HCT116 (cell line): ENCODE measurements at regions of chr7 and their contacts with region 1.

Region 1: DNA sequence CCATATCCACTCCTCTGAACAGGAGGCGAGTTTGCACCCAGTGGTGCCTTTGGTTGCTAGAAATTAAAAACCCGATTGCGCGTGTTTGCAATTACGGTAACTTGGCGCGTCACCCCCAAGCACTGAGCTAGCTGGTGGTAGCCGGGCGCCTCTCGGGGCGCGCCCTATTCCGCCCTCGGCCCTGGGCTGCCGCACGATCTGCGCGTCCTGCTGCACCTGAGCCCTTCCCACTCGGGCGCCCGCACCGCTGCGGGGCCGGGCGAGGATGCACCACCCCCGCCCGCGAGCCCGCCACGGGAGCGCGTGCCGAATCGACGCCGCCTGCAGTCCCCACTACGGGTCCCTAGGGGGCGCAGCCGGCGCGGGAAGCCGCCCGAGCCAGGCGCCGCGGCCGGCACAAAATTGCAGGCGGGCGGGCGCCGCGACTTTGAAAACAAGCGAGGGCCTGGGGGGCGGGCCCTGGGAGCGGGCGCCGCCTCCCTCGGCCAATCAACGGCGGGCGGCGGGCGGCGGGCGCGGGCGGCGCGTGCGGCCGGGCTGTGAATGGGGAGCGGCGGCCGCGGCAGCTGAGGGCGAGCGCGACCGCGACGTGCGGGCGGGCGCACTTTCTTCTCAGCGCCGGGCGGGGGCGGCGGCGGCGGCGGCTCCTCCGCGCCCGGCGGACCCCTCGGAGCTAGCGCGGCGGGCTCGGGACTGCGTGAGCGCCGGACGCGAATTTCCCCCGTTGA is at the start of gene SDK1:
- DNase-seq: peak; percentile 71
- ATAC-seq: peak; percentile 95
- H3K4me3 ChIP-seq: no peak within 1 kb of the TSS
- H3K27ac ChIP-seq: no peak within 1 kb of the TSS
- H3K4me1 ChIP-seq: peaks cover 0 to 2% of the 10 kb centered on the region in 2 experiments; a peak in 1 of 4 replicates
- H3K27me3 ChIP-seq: peaks cover 37% of the 10 kb centered on the region
- CTCF ChIP-seq: peak; percentile 44 to 74 (median 60); a peak in 5 of 6 replicates
- POLR2A ChIP-seq: no peak
- RAD21 ChIP-seq: peak; percentile 72
- total RNA-seq, gene SDK1: 0.05 TPM

Region 2: GRCh38 chr7:3673524-3673923 is 372.7 kb after region 1 on chr7:
- CTCF ChIA-PET with region 1: interaction called, 3 read pairs
- POLR2A ChIA-PET with region 1: no interaction called
- RAD21 ChIA-PET with region 1: no interaction called
- intact Hi-C with region 1: loop called (anchors 10 kb)
- DNase-seq: no peak
- ATAC-seq: peak; percentile 71; the same call in 1 of the 2 replicates
- H3K4me3 ChIP-seq: no peak overlapping the region
- H3K27ac ChIP-seq: no peak overlapping the region
- H3K4me1 ChIP-seq: no peaks in the 10 kb centered on the region
- H3K27me3 ChIP-seq: peaks cover 13% of the 10 kb centered on the region; the same call in 1 of the 2 replicates
- CTCF ChIP-seq: peak; percentile 52 to 72 (median 67); a peak in 5 of 6 replicates
- POLR2A ChIP-seq: no peak
- RAD21 ChIP-seq: peak; percentile 48

Region 3: DNA sequence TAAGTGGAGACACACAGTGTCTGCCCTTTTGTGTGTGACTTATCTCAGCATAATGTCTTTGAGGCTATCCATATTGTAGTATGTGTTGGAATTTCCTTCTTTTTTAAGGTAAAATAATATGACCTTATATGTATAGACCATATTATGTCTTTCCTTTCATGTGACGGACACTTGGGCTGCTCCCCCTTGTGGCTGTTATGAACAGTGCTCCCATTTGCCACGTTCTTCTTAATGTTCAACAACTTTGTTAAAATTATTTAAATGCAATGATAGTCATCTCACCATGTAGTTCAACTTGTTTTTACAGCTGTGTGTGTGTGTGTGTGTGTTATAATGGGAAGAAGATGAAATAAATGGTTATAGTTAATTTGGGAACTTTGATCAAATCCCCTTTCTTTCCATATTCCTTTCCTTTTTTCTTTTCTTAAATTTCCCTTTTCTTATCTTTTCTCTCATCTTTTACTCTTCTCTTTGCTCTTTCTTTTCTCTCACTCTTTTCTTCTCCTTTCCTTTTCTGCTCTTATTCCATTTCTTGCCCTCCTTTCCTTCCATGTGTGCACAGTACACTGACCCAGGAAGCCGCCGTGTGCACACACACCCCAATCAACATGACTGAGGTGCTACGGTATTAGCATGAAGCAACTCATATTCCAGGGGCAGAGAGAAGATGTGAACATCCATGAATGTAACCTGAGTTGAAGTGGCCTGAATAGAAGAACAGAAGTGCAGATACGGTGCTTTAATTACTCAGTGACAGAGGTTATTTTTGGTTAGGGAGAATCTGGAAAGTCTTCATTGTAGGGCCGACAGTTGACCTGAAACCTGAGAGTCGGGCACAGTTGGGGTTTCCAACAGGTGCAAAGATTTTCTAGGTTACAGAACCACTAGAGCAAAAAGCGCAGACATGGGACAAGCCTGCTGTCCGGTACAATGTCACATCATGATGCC is 596.9 kb after region 1 on chr7:
- CTCF ChIA-PET with region 1: no interaction called
- POLR2A ChIA-PET with region 1: no interaction called
- RAD21 ChIA-PET with region 1: no interaction called
- intact Hi-C with region 1: loop called (anchors 5 kb)
- DNase-seq: peak; percentile 29
- ATAC-seq: peak; percentile 73
- H3K4me3 ChIP-seq: no peak overlapping the region
- H3K27ac ChIP-seq: no peak overlapping the region
- H3K4me1 ChIP-seq: no peaks in the 10 kb centered on the region
- H3K27me3 ChIP-seq: peaks cover 41% of the 10 kb centered on the region
- CTCF ChIP-seq: peak; percentile 33 to 90 (median 71); a peak in 5 of 6 replicates
- POLR2A ChIP-seq: no peak
- RAD21 ChIP-seq: peak; percentile 59